Left cardiac atrium (tissue), 4 donors: ENCODE measurements at regions of chr17 and their contacts with region 1.

Region 1: DNA sequence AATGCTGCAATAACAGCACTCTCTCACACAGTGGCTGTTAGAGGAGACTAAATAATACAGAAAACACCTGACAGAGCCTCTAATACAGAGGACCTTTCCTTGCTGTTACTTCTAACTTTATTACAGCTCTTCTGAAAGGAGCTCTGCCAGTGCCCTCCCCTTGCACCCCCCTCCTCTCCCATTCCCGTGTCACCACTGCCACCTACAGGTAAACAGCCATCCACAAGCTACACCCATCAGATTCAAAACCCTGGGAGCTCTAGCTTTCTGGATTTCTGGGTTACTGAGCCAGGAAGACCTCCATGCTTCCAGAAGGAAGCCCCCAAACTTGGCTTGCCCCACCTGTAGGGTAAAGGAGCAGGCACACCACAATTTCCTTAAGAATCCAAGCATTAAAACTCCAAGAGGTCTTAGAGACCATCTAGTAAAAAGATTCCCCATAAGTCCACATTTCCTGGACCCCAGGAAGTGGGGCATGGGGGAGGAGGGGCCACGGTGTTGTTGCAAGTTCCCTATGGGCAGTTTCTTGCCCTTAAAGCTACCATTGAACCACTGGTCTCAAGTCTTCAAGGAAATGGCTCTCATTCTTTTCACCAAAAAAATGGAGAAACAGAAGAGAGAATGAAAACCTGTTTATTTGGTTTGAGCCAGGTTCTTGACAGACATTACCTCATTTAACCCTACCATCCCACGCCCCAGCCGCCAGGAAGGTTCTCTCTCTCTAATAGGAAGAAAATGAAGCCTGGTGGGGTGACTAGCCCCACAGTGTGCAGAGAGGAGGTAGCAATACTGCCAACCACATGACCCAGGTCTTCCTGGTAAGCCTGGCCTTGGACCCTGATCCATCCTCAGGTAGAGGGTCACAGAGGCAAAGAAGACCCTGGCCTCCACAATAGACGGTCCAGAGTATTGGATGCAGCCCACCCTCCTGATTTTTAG is 52.8 kb downstream of the TOM1L2 start:
- DNase-seq: peak; percentile 77
- ATAC-seq: peak; percentile 75 to 77

Region 2: GRCh38 chr17:17812211-17813057 is 107.0 kb before region 1 on chr17:
- intact Hi-C with region 1: loop called in 1 of 2 experiments (anchors 5 kb)
- DNase-seq: peak; percentile 78
- ATAC-seq: peak; percentile 17 to 18